WTC11 (cell line): ENCODE measurements at regions of chr2 and their contacts with region 1.

Region 1: DNA sequence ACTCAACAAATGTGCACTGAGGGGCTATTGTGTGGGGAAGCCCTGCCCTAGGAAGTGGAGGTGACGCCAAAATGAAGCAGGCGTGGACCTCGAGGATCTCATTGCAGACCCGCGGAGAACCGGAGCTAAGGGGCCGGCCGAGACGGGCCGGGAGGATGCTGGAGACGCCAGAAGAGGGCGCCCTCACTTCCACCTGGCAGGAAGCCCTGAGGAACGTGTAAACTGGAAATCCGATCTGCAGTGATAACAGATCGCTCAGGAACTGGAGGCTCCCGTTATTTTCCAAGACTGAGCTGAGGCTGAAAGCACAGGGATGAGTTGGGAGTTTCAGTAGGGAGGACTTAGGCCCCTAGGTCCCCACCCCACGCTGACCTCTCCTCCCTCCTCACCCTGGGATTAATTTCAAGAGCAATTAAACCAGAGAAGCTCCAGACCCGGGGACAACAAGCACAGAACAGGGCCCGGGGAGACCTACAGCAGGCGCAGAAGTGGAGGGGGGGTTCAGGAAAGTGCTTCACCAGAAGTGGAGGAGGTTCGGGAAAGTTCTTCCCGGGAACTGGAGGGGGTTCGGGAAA is 7.7 kb upstream of the COL6A3 start:
- DNase-seq: peak; percentile 90
- ATAC-seq: peak; percentile 98
- H3K4me3 Mint-ChIP-seq: peak overlapping the region; percentile 34; the same call in 1 of the 2 replicates
- H3K27ac Mint-ChIP-seq: no peak overlapping the region
- H3K4me1 Mint-ChIP-seq: peaks cover 9% of the 10 kb centered on the region
- H3K27me3 Mint-ChIP-seq: peaks cover 44% of the 10 kb centered on the region
- CTCF ChIP-seq: peak; percentile 69; the same call in 1 of the 2 replicates

Region 2: GRCh38 chr2:237154082-237154638 is 267.5 kb before region 1 on chr2:
- CTCF ChIA-PET with region 1: interaction called, 13 read pairs
- POLR2A ChIA-PET with region 1: no interaction called
- DNase-seq: peak; percentile 64
- ATAC-seq: peak; percentile 38; the same call in 1 of the 2 replicates
- H3K4me3 Mint-ChIP-seq: no peak overlapping the region
- H3K27ac Mint-ChIP-seq: no peak overlapping the region
- H3K4me1 Mint-ChIP-seq: peaks cover 18% of the 10 kb centered on the region
- H3K27me3 Mint-ChIP-seq: no peaks in the 10 kb centered on the region; the same call in 1 of the 2 replicates
- CTCF ChIP-seq: peak; percentile 52

Region 3: GRCh38 chr2:237280229-237280628 is 141.4 kb before region 1 on chr2:
- CTCF ChIA-PET with region 1: no interaction called
- POLR2A ChIA-PET with region 1: no interaction called
- DNase-seq: no peak
- ATAC-seq: no peak
- H3K4me3 Mint-ChIP-seq: no peak overlapping the region
- H3K27ac Mint-ChIP-seq: no peak overlapping the region
- H3K4me1 Mint-ChIP-seq: peaks cover 6% of the 10 kb centered on the region
- H3K27me3 Mint-ChIP-seq: peaks cover 2% of the 10 kb centered on the region; the same call in 1 of the 2 replicates
- CTCF ChIP-seq: no peak

Region 4: DNA sequence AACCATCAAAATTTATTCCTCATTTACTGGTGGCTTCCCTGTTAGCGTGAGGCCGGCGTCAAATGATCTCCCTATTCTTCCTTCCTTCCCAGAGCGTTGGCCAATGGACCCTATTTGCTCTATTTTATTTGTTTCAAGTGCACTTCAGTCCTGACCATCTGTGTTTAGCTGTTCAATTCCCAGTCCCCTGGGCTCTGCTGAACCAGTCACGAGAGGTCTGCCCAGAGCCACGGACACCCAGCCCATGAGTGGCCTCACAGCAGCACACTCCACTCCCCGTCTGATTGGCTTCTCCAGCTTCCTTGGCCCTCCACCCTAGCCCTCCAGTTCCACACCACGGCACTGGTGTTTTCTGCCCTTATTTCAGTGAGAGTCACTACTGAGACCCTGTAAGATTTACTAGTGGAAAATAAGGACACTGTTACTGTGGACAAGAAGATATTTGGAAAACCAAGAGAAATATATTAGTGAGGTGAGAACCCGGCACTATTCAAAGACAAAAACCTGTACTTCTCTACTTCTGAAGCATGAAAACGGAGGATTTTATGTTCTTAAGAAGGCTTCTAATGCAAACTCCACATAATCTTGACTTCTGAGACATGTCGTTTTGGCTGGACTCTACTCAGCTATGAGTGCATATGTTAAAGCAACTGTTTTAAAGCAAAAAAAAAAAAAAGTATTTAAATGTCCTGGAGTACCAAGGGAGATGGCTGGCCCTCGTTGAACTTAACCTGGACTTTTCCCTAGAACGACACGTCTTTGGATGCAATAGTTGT is 94.3 kb before region 1 on chr2:
- CTCF ChIA-PET with region 1: no interaction called
- POLR2A ChIA-PET with region 1: no interaction called
- DNase-seq: no peak
- ATAC-seq: no peak
- H3K4me3 Mint-ChIP-seq: no peak overlapping the region
- H3K27ac Mint-ChIP-seq: no peak overlapping the region
- H3K4me1 Mint-ChIP-seq: peaks cover 12% of the 10 kb centered on the region
- H3K27me3 Mint-ChIP-seq: no peaks in the 10 kb centered on the region
- CTCF ChIP-seq: no peak

Region 5: DNA sequence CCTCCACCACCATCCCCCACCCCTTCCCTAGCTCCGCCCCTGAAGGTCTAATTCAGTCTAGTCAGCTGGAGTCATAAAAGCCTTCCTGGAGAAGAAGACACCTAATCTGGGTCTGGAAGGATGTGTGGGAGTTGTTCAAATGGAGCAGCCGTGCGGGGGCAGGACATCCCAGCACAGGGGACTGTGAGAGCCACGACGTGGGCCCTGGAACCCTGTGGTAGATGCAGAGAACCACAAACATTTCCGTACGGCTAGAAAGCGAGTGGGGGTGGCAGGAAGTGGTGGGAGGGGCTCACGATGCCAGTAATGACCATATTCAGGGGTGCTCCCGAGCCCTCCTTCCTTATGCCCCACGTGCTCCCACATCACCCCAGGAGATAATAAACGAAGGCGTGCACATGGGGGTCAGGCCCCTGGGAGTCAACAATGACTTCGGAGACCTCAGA is 13.3 kb after region 1 on chr2:
- CTCF ChIA-PET with region 1: interaction called, 63 read pairs
- POLR2A ChIA-PET with region 1: interaction called, 3 read pairs
- DNase-seq: no peak
- ATAC-seq: no peak
- H3K4me3 Mint-ChIP-seq: no peak overlapping the region
- H3K27ac Mint-ChIP-seq: no peak overlapping the region
- H3K4me1 Mint-ChIP-seq: peaks cover 42% of the 10 kb centered on the region
- H3K27me3 Mint-ChIP-seq: no peaks in the 10 kb centered on the region
- CTCF ChIP-seq: no peak

Region 6: GRCh38 chr2:237441605-237442274 is 20.1 kb after region 1 on chr2:
- CTCF ChIA-PET with region 1: interaction called, 63 read pairs
- POLR2A ChIA-PET with region 1: no interaction called
- DNase-seq: no peak
- ATAC-seq: no peak
- H3K4me3 Mint-ChIP-seq: no peak overlapping the region
- H3K27ac Mint-ChIP-seq: no peak overlapping the region
- H3K4me1 Mint-ChIP-seq: peaks cover 17% of the 10 kb centered on the region
- H3K27me3 Mint-ChIP-seq: peaks cover 6% of the 10 kb centered on the region
- CTCF ChIP-seq: no peak

Region 7: DNA sequence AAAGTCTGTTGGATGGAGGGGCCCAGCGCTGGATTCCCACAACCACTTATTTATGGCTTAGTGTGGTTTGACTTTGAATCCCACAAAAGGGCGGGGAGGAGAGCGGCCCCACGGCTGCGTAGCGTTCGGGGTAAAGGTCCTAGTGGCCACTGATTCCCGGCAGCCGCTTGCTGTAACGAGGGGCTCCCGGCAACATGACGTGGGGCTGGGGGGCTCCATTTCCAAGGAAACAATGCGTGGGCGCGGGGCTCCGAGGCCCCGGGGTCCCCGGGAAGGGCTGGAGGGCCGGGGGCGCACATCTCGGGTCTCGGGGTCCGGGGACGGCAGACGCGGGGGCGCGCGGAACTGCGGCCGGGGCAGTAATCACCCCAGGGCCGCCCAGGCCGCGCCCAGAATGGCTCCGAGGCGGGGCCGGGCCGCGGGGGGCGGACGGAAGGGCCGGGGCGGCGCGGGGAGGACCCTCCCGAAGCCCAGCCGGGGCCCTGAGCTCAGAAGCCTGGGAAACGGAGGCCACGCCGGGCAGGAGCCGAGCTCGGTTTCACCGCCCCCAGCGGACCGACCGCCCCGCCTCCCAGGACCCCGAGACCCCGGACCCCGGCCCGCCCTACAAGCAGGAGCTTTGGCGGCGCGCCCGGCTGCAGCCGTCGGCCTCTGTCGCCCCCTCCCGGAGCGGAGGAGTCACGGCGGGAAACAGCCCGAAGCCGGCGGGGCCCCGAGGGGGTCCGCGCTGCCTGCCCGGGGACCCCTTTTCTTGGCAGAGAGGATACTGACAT is 53.5 kb after region 1 on chr2:
- CTCF ChIA-PET with region 1: interaction called, 36 read pairs
- POLR2A ChIA-PET with region 1: no interaction called
- DNase-seq: peak; percentile 88
- ATAC-seq: peak; percentile 81
- H3K4me3 Mint-ChIP-seq: peak overlapping the region; percentile 84
- H3K27ac Mint-ChIP-seq: peak overlapping the region; percentile 53; the same call in 1 of the 2 replicates
- H3K4me1 Mint-ChIP-seq: peaks cover 18% of the 10 kb centered on the region
- H3K27me3 Mint-ChIP-seq: peaks cover 47% of the 10 kb centered on the region
- CTCF ChIP-seq: peak; percentile 70